HAP-1 (cell line): ENCODE measurements at regions of chr12 and their contacts with region 1.

Region 1: GRCh38 chr12:118372541-118373495 is at the start of gene TAOK3:
- DNase-seq: peak; percentile 98 to 99
- H3K4me3 ChIP-seq: peak within 1 kb of the TSS; percentile 93
- H3K4me1 ChIP-seq: peaks cover 38% of the 10 kb centered on the region
- H3K27me3 ChIP-seq: no peaks in the 10 kb centered on the region

Region 2: GRCh38 chr12:117874842-117875434 is 497.9 kb before region 1 on chr12:
- in situ Hi-C with region 1: loop called (anchors 25 kb)
- DNase-seq: peak; percentile 48 to 85
- H3K4me3 ChIP-seq: no peak overlapping the region
- H3K4me1 ChIP-seq: no peaks in the 10 kb centered on the region
- H3K27me3 ChIP-seq: peaks cover 4% of the 10 kb centered on the region

Region 3: GRCh38 chr12:118135788-118136558 is 236.8 kb before region 1 on chr12 and contains the start of gene PEBP1:
- in situ Hi-C with region 1: loop called (anchors 10 kb)
- DNase-seq: peak; percentile 90 to 97
- H3K4me3 ChIP-seq: peak within 1 kb of the TSS; percentile 85
- H3K4me1 ChIP-seq: peaks cover 20% of the 10 kb centered on the region
- H3K27me3 ChIP-seq: no peaks in the 10 kb centered on the region

Region 4: DNA sequence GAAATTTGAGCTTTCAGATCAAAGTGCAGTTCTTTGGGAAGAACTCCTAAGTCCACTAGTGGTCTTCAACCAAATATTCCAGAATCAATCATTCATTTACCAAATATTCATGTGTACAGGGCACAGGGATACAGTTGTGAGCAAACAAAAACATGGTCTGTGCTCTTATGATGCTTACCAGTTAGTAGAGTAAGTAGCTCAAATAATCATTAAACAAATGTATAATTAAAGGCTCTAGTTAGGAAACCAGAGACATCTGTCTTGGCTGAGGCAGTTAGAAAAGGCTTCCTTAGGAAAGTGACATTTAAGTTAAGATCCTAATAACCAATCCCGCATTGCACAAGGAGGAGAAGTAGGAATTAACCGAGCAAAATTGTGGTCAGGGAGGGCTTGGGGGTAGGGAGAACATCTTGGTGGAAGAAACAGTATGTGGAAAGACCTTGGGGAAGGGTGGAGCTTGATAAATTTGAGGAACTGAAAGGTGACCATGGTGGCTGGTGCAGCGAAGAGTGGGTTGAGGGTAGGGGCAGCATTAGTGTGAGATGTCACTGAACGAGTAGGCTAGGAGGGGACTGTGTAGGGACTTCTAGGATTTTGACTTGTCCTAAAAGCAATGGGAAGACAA is 196.9 kb before region 1 on chr12:
- in situ Hi-C with region 1: loop called (anchors 10 kb)
- DNase-seq: no peak
- H3K4me3 ChIP-seq: no peak overlapping the region
- H3K4me1 ChIP-seq: no peaks in the 10 kb centered on the region
- H3K27me3 ChIP-seq: no peaks in the 10 kb centered on the region

Region 5: GRCh38 chr12:118680356-118680963 is 307.6 kb after region 1 on chr12:
- in situ Hi-C with region 1: no loop called
- DNase-seq: peak in 1 of 2 experiments; percentile 7
- H3K4me3 ChIP-seq: no peak overlapping the region
- H3K4me1 ChIP-seq: no peaks in the 10 kb centered on the region
- H3K27me3 ChIP-seq: no peaks in the 10 kb centered on the region